Naive thymus-derived CD4-positive, alpha-beta T cell (primary cell): ENCODE measurements at regions of chr16 and their contacts with region 1.

Region 1: GRCh38 chr16:23835390-23836077 is at the start of gene PRKCB:
- DNase-seq: peak; percentile 83 to 98 (median 90)
- ATAC-seq: peak; percentile 97
- H3K4me3 ChIP-seq: peak within 1 kb of the TSS; percentile 65
- H3K4me3 Mint-ChIP-seq: peak within 1 kb of the TSS; percentile 88 to 100 (median 98)
- H3K27ac ChIP-seq: peak within 1 kb of the TSS; percentile 65
- H3K27ac Mint-ChIP-seq: peak within 1 kb of the TSS; percentile 69 to 95 (median 85)
- H3K4me1 ChIP-seq: peaks cover 25 to 35% of the 10 kb centered on the region in 2 donors
- H3K4me1 Mint-ChIP-seq: peaks cover 52 to 65% (median 60%) of the 10 kb centered on the region in 7 donors
- H3K27me3 ChIP-seq: no peaks in the 10 kb centered on the region
- H3K27me3 Mint-ChIP-seq: peaks cover 0 to 3% (median 0%) of the 10 kb centered on the region in 5 donors
- total RNA-seq, gene PRKCB: 72.5 to 180 (median 73.1) TPM

Region 2: GRCh38 chr16:23615805-23616204 is 219.7 kb before region 1 on chr16:
- CTCF ChIA-PET with region 1: no interaction called
- POLR2A ChIA-PET with region 1: no interaction called
- intact Hi-C with region 1: no loop called
- DNase-seq: no peak
- ATAC-seq: no peak
- H3K4me3 ChIP-seq: no peak overlapping the region
- H3K4me3 Mint-ChIP-seq: no peak overlapping the region
- H3K27ac ChIP-seq: no peak overlapping the region
- H3K27ac Mint-ChIP-seq: peak overlapping the region in 1 of 9 donors; percentile 37
- H3K4me1 ChIP-seq: no peaks in the 10 kb centered on the region
- H3K4me1 Mint-ChIP-seq: no peaks in the 10 kb centered on the region
- H3K27me3 ChIP-seq: no peaks in the 10 kb centered on the region
- H3K27me3 Mint-ChIP-seq: no peaks in the 10 kb centered on the region

Region 3: DNA sequence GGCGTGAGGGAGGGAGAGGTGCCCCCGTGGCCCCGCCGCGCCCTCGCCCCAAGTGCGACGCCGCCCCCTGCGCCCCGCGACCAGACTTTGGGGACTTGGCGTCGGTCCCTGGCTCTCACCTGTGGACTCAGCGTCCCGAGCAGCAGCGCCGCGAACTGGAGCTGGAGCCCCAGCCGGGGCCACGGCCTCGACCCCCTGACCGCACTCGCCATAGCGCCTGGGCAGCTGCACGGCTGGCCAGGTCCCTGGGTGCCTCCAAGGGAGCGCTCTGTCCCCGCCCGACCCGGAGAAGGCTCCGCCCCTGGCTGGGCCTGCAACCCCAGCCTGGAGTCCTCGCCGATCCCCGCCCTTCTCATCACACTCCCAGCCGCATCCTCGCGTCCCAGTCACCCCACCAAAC is 122.6 kb before region 1 on chr16 and contains the start of gene ERN2:
- CTCF ChIA-PET with region 1: no interaction called
- POLR2A ChIA-PET with region 1: no interaction called
- intact Hi-C with region 1: no loop called
- DNase-seq: no peak
- ATAC-seq: no peak
- H3K4me3 ChIP-seq: no peak within 1 kb of the TSS
- H3K4me3 Mint-ChIP-seq: peak within 1 kb of the TSS in 1 of 10 donors; percentile 52
- H3K27ac ChIP-seq: no peak within 1 kb of the TSS
- H3K27ac Mint-ChIP-seq: no peak within 1 kb of the TSS
- H3K4me1 ChIP-seq: no peaks in the 10 kb centered on the region
- H3K4me1 Mint-ChIP-seq: peaks cover 0 to 3% (median 0%) of the 10 kb centered on the region in 7 donors
- H3K27me3 ChIP-seq: peaks cover 0 to 2% of the 10 kb centered on the region in 2 donors
- H3K27me3 Mint-ChIP-seq: peaks cover 42 to 63% (median 60%) of the 10 kb centered on the region in 5 donors
- total RNA-seq, gene ERN2: not detected

Region 4: GRCh38 chr16:23847948-23848347 is 12.4 kb after region 1 on chr16:
- CTCF ChIA-PET with region 1: no interaction called
- POLR2A ChIA-PET with region 1: interaction called, 5 read pairs
- intact Hi-C with region 1: loop called in 1 of 2 experiments (anchors 1 kb)
- DNase-seq: peak in 8 of 9 donors; percentile 52 to 76 (median 66)
- ATAC-seq: peak; percentile 99
- H3K4me3 ChIP-seq: peak overlapping the region; percentile 5
- H3K4me3 Mint-ChIP-seq: peak overlapping the region; percentile 37 to 78 (median 42)
- H3K27ac ChIP-seq: peak overlapping the region; percentile 19
- H3K27ac Mint-ChIP-seq: peak overlapping the region; percentile 17 to 89 (median 78)
- H3K4me1 ChIP-seq: peaks cover 34 to 35% of the 10 kb centered on the region in 2 donors
- H3K4me1 Mint-ChIP-seq: peaks cover 59 to 90% (median 77%) of the 10 kb centered on the region in 7 donors
- H3K27me3 ChIP-seq: no peaks in the 10 kb centered on the region
- H3K27me3 Mint-ChIP-seq: no peaks in the 10 kb centered on the region

Region 5: GRCh38 chr16:23857256-23857880 is 21.8 kb after region 1 on chr16:
- CTCF ChIA-PET with region 1: interaction called, 3 read pairs
- POLR2A ChIA-PET with region 1: interaction called, 3 read pairs
- intact Hi-C with region 1: loop called in 1 of 2 experiments (anchors 1 kb)
- DNase-seq: no peak
- ATAC-seq: no peak
- H3K4me3 ChIP-seq: no peak overlapping the region
- H3K4me3 Mint-ChIP-seq: peak overlapping the region in 3 of 10 donors; percentile 0 to 32 (median 4)
- H3K27ac ChIP-seq: no peak overlapping the region
- H3K27ac Mint-ChIP-seq: peak overlapping the region in 8 of 9 donors; percentile 12 to 68 (median 40)
- H3K4me1 ChIP-seq: peaks cover 16 to 45% of the 10 kb centered on the region in 2 donors
- H3K4me1 Mint-ChIP-seq: peaks cover 64 to 97% (median 85%) of the 10 kb centered on the region in 7 donors
- H3K27me3 ChIP-seq: no peaks in the 10 kb centered on the region
- H3K27me3 Mint-ChIP-seq: no peaks in the 10 kb centered on the region

Region 6: GRCh38 chr16:23877107-23878090 is 41.9 kb after region 1 on chr16:
- CTCF ChIA-PET with region 1: interaction called, 3 read pairs
- POLR2A ChIA-PET with region 1: no interaction called
- intact Hi-C with region 1: loop called in 1 of 2 experiments (anchors 5 kb)
- DNase-seq: peak in 5 of 9 donors; percentile 31 to 43 (median 35)
- ATAC-seq: peak; percentile 43
- H3K4me3 ChIP-seq: no peak overlapping the region
- H3K4me3 Mint-ChIP-seq: peak overlapping the region in 1 of 10 donors; percentile 1
- H3K27ac ChIP-seq: no peak overlapping the region
- H3K27ac Mint-ChIP-seq: peak overlapping the region in 6 of 9 donors; percentile 10 to 93 (median 74)
- H3K4me1 ChIP-seq: peaks cover 26 to 27% of the 10 kb centered on the region in 2 donors
- H3K4me1 Mint-ChIP-seq: peaks cover 53 to 77% (median 71%) of the 10 kb centered on the region in 7 donors
- H3K27me3 ChIP-seq: no peaks in the 10 kb centered on the region
- H3K27me3 Mint-ChIP-seq: no peaks in the 10 kb centered on the region